Activated B cell treated with CpG ODN at 0.5 μM for 24 hours (primary cell): ENCODE measurements at regions of chr12 and their contacts with region 1.

Region 1: DNA sequence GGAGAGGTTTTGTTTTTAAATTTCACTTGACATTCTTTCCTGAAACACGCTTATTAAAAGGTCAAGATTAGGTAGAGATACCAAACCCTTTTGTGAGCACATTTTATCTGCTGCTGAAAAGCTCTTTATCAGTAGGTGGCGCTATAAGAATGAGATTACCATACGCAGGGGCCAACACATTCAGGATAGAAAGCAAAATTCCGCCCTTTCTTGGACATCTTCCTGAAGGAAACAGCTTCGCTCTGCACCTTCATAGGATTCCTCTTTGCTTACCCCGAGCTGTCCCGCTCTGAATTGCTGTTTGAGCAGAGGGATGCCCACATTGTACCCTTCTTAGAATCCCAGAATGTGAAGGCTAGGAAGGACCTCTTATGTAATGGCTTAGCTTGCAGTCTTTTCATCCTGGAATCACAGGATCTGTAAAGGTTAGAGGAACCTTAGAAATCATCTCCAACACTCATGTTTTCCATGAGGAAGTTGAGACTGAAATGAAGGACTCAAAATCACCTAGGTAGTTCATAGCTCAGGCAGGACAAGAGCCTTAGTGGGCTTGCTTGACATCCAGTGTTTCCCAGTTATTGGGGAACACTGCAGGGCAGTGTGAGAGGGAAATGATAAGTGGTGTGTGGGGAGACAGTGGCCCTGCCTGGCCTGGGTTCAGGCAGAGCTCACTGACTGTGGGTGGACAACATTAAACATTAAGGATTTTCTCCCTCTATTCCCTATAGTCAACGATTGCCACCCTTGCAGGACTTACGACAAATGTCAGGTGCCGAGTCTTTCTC is 38.7 kb upstream of the CRY1 start:
- DNase-seq: no peak
- ATAC-seq: no peak
- H3K4me3 Mint-ChIP-seq: no peak overlapping the region
- H3K27ac Mint-ChIP-seq: no peak overlapping the region
- H3K4me1 Mint-ChIP-seq: no peaks in the 10 kb centered on the region
- H3K27me3 Mint-ChIP-seq: no peaks in the 10 kb centered on the region
- CTCF ChIP-seq: no peak

Region 2: DNA sequence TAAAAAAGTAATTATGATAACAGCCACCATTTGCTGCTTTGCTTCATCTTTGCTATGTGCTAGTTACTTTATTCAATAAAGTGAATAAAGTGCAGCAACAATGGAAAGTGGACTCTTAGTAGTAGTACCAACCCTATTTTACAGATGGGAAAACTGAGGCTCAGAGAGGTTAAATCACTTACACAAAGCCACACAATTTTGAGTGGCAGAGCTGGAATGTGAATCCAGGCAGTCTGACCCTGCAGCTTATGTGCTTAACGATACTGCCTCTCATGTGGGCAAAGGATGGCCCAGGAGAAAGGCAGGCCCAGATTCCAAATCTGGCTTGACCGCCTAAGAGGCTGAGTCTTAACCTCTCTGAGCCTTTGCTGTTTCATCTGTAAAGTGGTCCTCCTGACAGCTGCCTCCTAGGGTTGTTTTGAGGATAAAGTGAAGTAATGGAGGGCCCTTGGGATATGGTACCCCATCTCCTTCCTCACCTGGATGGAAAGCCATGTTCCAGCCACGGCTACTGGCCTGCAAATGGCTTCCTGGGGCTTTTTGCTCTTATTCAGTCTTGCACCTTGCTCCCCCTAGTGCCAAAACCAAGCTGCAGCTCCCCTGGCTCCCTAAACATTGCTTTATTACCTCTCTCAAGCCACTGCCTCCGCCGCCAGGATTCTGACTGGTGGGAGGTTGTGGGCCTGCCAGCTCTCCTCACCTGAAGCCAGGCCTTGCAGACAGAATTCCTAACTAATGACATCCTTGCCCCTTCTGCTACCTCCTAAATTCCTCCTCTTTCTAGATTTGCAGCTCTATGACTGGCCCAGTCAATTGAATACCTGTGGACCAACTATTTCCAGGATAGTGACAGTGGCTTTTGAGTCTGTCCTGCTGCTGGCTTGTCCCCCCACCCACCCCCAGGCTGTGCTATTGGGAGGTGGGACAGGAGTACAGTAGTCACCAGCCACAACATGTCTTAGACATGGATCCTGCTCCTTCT is 270.3 kb after region 1 on chr12:
- CTCF ChIA-PET with region 1: interaction called, 4 read pairs
- POLR2A ChIA-PET with region 1: no interaction called
- intact Hi-C with region 1: loop called (anchors 2 kb)
- DNase-seq: no peak
- ATAC-seq: no peak
- H3K4me3 Mint-ChIP-seq: no peak overlapping the region
- H3K27ac Mint-ChIP-seq: no peak overlapping the region
- H3K4me1 Mint-ChIP-seq: no peaks in the 10 kb centered on the region
- H3K27me3 Mint-ChIP-seq: no peaks in the 10 kb centered on the region
- CTCF ChIP-seq: no peak